GM23248 (cell line): ENCODE measurements at regions of chr5 and their contacts with region 1.

Region 1: DNA sequence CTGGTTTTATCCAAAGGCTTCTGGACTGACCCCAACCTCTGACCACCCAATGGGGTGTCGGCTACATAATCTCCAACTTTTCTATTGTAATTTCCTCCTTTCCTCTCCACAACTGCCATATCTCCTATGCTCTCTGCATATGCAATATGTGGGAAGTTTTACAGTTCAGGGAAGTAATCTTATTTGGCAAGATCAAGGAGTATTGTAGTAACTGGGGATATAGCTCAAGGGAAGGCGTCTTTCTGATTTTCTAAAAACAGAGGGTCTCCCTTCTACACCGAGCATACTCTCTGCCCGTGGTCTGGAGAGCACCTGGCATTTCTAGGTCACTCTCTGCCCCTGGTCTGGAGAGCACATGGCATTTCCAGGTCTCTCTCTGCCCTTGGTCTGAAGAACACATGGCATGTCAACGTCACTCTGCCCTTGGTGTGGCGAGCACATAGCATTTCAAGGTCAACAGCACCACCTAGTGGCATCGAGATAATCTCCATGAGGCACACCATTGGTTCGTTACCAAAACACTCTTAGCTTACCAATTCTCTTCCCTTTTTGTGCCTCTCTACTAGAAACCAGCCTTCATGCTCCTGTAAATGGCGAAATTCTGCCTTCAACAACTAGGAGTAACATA is 616.4 kb upstream of the NUDT12 start:
- DNase-seq: peak; percentile 40
- H3K4me3 ChIP-seq: no peak overlapping the region
- H3K27ac ChIP-seq: no peak overlapping the region
- H3K4me1 ChIP-seq: no peaks in the 10 kb centered on the region
- H3K27me3 ChIP-seq: no peaks in the 10 kb centered on the region

Region 2: GRCh38 chr5:103582364-103582763 is 596.6 kb before region 1 on chr5:
- in situ Hi-C with region 1: loop called (anchors 25 kb)
- DNase-seq: peak; percentile 63
- H3K4me3 ChIP-seq: no peak overlapping the region
- H3K27ac ChIP-seq: no peak overlapping the region
- H3K4me1 ChIP-seq: no peaks in the 10 kb centered on the region
- H3K27me3 ChIP-seq: peaks cover 4% of the 10 kb centered on the region; the same call in 1 of the 2 replicates